ENCODE measurements at regions of chr20 and their contacts with region 1.

Region 1: GRCh38 chr20:62642040-62642665 is at the start of gene SLCO4A1:
- DNase-seq: peak; percentile 96
- ATAC-seq: peak; percentile 85
- H3K4me3 Mint-ChIP-seq: peak within 1 kb of the TSS; percentile 92
- H3K27ac Mint-ChIP-seq: peak within 1 kb of the TSS; percentile 85
- H3K4me1 Mint-ChIP-seq: peaks cover 23% of the 10 kb centered on the region
- H3K27me3 Mint-ChIP-seq: peaks cover 8% of the 10 kb centered on the region
- total RNA-seq, gene SLCO4A1: 57.5 to 61.9 TPM

Region 2: DNA sequence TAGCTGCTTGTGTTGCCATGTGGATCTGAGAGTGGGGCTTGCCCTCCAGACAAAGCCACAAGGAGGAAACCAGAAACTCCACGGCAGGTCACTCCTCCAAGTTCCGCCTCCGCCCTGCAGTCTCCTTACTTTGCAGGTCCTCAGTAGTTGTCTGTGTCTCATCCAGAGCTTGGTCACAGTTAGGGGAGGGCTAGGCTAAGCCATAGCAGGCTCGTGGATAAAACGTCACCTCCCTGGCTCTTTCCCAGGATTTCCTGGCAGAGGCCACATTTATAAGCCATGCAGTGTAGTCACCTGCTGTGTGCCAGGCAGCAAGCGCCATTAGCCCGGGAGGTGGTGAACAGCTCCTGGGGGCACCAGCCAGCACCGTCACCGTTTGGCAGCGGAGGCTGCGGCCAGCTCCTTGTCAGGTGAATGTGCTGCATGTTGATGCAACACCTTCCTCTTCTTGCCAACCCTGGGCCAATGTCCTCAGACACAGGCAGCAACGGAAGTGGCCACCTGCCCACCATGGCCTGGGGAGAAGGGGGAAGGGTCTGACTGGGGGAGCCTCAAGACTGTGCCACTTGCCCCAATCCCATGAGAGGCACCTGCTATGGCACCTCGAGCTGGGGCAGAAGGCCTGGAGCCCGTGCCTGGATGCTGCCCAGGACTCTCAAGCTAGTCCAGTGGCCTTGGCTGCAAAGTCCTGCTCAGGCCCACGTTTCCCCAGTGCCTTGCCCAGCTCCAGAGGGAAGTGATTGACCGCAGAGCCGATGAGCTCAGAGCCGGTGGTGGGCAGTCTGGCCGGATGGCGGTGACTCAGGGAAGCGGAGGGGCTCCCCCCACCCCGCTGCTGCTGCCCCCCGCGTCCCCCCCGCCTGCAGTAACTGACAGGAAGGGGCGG is 38.9 kb before region 1 on chr20:
- POLR2A ChIA-PET with region 1: interaction called, 18 read pairs
- DNase-seq: peak; percentile 76
- ATAC-seq: peak; percentile 79
- H3K4me3 Mint-ChIP-seq: peak overlapping the region; percentile 86
- H3K27ac Mint-ChIP-seq: peak overlapping the region; percentile 95
- H3K4me1 Mint-ChIP-seq: peaks cover 15% of the 10 kb centered on the region
- H3K27me3 Mint-ChIP-seq: peaks cover 34% of the 10 kb centered on the region

Region 3: GRCh38 chr20:62616728-62617621 is 25.2 kb before region 1 on chr20:
- POLR2A ChIA-PET with region 1: interaction called, 30 read pairs
- DNase-seq: peak; percentile 85
- ATAC-seq: peak; percentile 48
- H3K4me3 Mint-ChIP-seq: peak overlapping the region; percentile 63
- H3K27ac Mint-ChIP-seq: peak overlapping the region; percentile 98
- H3K4me1 Mint-ChIP-seq: peaks cover 35% of the 10 kb centered on the region
- H3K27me3 Mint-ChIP-seq: peaks cover 7% of the 10 kb centered on the region

Region 4: GRCh38 chr20:62623488-62624324 is 18.4 kb before region 1 on chr20:
- POLR2A ChIA-PET with region 1: interaction called, 61 read pairs
- DNase-seq: peak; percentile 92
- ATAC-seq: peak; percentile 83
- H3K4me3 Mint-ChIP-seq: peak overlapping the region; percentile 86
- H3K27ac Mint-ChIP-seq: peak overlapping the region; percentile 98
- H3K4me1 Mint-ChIP-seq: peaks cover 28% of the 10 kb centered on the region
- H3K27me3 Mint-ChIP-seq: no peaks in the 10 kb centered on the region

Region 5: DNA sequence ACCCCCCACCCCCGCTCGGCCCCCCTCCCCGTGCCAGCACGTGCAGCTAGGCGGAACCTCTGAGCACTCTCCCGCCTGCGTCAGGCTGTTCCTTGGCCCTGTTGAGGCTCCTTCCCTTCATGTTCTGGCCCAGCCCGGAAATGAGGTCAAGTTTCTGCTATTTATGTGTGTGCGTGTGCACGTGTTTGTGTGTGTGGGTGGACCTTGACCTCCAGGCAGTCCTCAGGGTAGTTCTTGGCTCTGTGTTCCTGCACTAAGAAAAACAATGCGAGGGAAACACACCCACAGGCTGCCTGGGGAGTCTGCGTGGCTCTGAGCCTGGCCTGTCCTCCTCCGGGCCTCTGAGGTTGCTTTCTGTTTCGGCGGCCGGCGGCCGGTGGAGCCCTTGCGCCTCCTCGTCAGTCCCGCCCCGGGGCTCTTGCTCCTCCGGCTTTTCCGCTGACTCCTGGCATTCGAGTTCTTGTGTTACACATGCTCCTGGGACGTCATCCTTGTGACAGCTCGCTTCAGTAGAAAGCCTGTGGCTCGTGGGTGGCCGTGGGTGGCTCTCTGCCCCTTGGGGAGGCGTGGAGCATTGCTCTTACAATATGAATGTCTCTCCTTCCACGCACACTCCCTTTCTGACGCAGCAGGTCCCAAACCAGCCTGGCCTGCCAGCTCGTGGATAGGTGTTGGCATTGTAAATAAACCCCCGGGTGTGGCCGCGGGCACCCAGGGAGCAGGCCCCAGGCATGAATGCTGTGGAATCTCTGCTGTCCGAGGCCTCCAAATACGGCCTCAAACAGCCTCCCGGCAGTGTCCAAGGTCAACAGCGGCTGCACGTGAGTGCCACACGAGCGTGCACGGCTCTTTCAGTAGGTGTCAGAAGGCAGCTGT is 10.1 kb after region 1 on chr20:
- POLR2A ChIA-PET with region 1: interaction called, 60 read pairs
- DNase-seq: peak; percentile 74
- ATAC-seq: peak; percentile 65
- H3K4me3 Mint-ChIP-seq: peak overlapping the region; percentile 84
- H3K27ac Mint-ChIP-seq: peak overlapping the region; percentile 98
- H3K4me1 Mint-ChIP-seq: peaks cover 42% of the 10 kb centered on the region
- H3K27me3 Mint-ChIP-seq: no peaks in the 10 kb centered on the region

Region 6: GRCh38 chr20:62704301-62704948 is 62.3 kb after region 1 on chr20:
- POLR2A ChIA-PET with region 1: no interaction called
- DNase-seq: no peak
- ATAC-seq: no peak
- H3K4me3 Mint-ChIP-seq: no peak overlapping the region
- H3K27ac Mint-ChIP-seq: peak overlapping the region; percentile 43
- H3K4me1 Mint-ChIP-seq: peaks cover 8% of the 10 kb centered on the region
- H3K27me3 Mint-ChIP-seq: peaks cover 20% of the 10 kb centered on the region

Region 7: DNA sequence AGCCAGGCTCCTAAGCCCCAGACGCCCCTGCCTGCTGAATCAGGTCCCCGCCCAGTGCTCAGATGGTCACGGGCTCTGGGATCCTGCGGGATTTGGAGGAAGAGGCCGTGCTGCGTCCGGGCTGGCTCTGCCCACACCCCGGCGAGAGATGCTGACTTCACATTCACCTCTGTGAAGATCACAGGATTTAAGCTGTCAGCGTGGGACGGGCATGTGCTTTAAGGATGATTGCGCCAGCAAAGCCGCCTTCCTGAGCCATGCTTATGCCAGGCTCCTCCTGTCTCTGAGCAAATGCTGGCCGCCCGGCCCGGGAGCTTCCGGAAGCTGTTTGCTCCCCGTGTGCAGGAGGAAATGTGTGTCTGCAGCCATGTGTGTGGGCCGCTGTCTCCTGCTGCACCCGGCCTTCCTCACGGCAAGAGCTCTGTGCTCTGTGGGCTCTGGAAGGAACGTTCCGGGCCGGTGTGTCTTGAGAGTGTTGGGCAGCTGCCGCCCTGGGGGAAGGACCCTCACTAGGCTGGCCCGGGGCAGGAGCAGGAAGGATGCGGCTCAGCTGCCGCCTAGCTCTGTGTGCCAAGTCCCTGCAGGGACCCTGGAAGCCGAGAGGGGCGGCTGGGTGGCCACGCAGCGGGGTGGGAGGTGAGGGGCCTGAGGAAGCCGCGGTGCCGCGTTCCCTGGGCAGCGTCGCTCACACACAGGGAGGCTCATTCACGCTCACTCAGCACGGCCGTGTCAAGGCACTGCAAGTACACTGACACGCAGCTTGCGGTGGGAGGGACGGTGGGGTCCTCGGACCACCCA is 383.6 kb after region 1 on chr20:
- POLR2A ChIA-PET with region 1: no interaction called
- DNase-seq: peak; percentile 28
- ATAC-seq: peak; percentile 46
- H3K4me3 Mint-ChIP-seq: peak overlapping the region; percentile 48
- H3K27ac Mint-ChIP-seq: peak overlapping the region; percentile 34
- H3K4me1 Mint-ChIP-seq: peaks cover 2% of the 10 kb centered on the region
- H3K27me3 Mint-ChIP-seq: peaks cover 21% of the 10 kb centered on the region